Kidney (tissue), 22 donors: ENCODE measurements at regions of chr4 and their contacts with region 1.

Region 1: DNA sequence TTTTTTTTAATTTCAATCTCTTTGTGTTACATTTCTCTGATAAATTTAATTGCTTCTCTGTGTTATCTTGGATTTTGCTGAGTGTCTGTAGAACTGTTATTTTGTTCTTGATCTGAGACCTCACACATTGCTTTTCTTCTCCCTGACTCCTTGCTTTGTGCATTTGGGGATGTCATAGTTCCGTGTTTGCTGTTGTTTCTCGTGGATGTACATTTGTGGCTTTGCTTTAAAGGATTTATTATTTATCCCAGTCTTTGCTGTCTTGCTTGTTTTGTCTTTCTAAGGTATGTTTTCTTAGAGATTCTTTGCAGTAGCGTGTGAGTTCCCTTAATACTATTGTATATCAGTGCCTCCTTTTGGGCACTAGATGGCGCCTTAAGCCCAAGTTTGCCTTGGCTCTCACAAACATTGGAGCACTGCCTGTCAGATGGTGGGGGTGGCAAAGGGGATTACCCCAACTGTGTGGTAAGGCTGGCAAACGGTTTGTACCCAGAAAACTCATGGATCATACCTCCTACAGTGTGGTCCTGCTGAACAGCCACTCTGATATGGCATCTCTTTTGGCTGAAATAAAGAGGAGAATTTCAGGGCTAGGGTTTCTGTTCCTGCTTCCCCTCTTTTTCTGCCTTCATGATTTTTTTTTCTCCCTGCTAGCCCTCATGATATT is 96.4 kb downstream of the PGRMC2 start:
- DNase-seq: peak in 4 of 5 donors; percentile 61 to 81 (median 64)
- H3K4me3 ChIP-seq: no peak overlapping the region
- H3K27ac ChIP-seq: no peak overlapping the region
- H3K4me1 ChIP-seq: peaks cover 0 to 3% (median 0%) of the 10 kb centered on the region in 3 donors
- H3K27me3 ChIP-seq: no peaks in the 10 kb centered on the region
- CTCF ChIP-seq: peak; percentile 96

Region 2: DNA sequence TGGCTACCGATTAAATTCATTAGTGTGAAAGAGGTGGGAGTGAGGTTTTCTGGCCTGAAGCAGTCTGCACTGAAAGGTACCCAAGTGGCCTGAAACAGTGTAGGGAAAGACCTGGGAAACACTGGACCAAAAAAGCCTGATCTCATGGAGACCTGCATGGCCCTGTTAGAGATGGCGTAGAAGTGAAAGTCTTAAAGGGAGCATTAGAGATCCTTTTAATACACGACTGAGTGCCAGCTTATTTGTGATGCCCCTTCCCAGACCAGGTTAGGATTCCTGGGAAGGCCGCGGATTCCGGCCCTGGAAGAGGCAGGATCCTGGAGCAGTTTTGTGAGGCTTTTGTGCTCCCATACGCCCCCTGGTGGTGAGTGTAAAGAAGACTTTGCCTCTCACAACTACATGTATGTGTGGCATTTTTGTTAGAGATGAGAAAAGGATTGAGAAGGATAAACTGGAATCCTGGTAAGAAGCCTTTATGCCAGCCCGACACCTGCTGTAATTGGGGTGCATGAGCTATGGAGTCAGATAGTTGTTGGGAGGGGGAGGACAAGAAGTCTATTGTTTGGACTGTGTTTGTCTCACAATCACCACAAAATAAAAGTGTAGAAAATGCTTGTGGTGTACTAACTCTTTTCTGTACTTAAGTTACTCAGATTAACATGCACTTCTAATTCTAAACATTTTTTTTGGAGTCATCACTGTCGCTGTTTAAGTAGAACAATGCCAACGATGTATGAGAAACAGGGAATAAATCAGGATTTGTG is 672.2 kb after region 1 on chr4:
- intact Hi-C with region 1: loop called (anchors 10 kb)
- DNase-seq: peak; percentile 80 to 94 (median 87)
- H3K4me3 ChIP-seq: no peak overlapping the region
- H3K27ac ChIP-seq: no peak overlapping the region
- H3K4me1 ChIP-seq: peaks cover 0 to 16% (median 7%) of the 10 kb centered on the region in 3 donors
- H3K27me3 ChIP-seq: no peaks in the 10 kb centered on the region
- CTCF ChIP-seq: peak; percentile 92